ENCODE measurements at regions of chr5 and their contacts with region 1.

Region 1: GRCh38 chr5:39148983-39149534 is 70.3 kb downstream of the FYB1 start:
- DNase-seq: peak in 4 of 5 donors; percentile 43 to 59 (median 56)
- H3K4me3 ChIP-seq: no peak overlapping the region
- H3K4me3 Mint-ChIP-seq: peak overlapping the region in 4 of 8 donors; percentile 2 to 36 (median 27)
- H3K27ac ChIP-seq: no peak overlapping the region
- H3K27ac Mint-ChIP-seq: peak overlapping the region; percentile 62 to 94 (median 86)
- H3K4me1 ChIP-seq: peaks cover 84% of the 10 kb centered on the region
- H3K4me1 Mint-ChIP-seq: peaks cover 59 to 87% (median 71%) of the 10 kb centered on the region in 4 donors
- H3K27me3 ChIP-seq: no peaks in the 10 kb centered on the region
- H3K27me3 Mint-ChIP-seq: no peaks in the 10 kb centered on the region

Region 2: DNA sequence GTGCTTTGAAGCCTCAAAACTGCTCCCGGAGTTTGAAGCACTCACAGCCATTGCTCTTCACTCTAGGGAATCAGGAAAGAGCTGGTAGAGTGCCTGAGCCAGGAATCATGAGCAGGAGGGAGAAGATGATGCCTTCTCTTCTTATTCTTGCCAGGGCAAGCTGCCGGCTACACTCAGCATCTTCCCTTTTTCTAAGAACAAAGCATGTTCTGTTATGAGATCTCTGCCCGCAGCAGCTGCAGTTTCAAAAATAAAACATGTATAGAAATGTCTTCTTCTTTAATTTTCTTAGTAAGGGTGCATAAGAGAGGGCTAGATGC is 17.0 kb before region 1 on chr5:
- CTCF ChIA-PET with region 1: no interaction called
- POLR2A ChIA-PET with region 1: no interaction called
- intact Hi-C with region 1: loop called (anchors 2 kb)
- DNase-seq: no peak
- H3K4me3 ChIP-seq: no peak overlapping the region
- H3K4me3 Mint-ChIP-seq: no peak overlapping the region
- H3K27ac ChIP-seq: no peak overlapping the region
- H3K27ac Mint-ChIP-seq: peak overlapping the region in 6 of 7 donors; percentile 17 to 84 (median 64)
- H3K4me1 ChIP-seq: peaks cover 27% of the 10 kb centered on the region
- H3K4me1 Mint-ChIP-seq: peaks cover 28 to 53% (median 44%) of the 10 kb centered on the region in 4 donors
- H3K27me3 ChIP-seq: no peaks in the 10 kb centered on the region
- H3K27me3 Mint-ChIP-seq: no peaks in the 10 kb centered on the region

Region 3: GRCh38 chr5:39194466-39195136 is 45.5 kb after region 1 on chr5:
- CTCF ChIA-PET with region 1: interaction called, 6 read pairs
- POLR2A ChIA-PET with region 1: interaction called, 275 read pairs
- intact Hi-C with region 1: loop called (anchors 1 kb)
- DNase-seq: no peak
- H3K4me3 ChIP-seq: peak overlapping the region; percentile 13 to 49
- H3K4me3 Mint-ChIP-seq: peak overlapping the region; percentile 84 to 92 (median 88)
- H3K27ac ChIP-seq: peak overlapping the region; percentile 59
- H3K27ac Mint-ChIP-seq: peak overlapping the region; percentile 90 to 98 (median 95)
- H3K4me1 ChIP-seq: peaks cover 77% of the 10 kb centered on the region
- H3K4me1 Mint-ChIP-seq: peaks cover 53 to 79% (median 66%) of the 10 kb centered on the region in 4 donors
- H3K27me3 ChIP-seq: no peaks in the 10 kb centered on the region
- H3K27me3 Mint-ChIP-seq: no peaks in the 10 kb centered on the region

Region 4: DNA sequence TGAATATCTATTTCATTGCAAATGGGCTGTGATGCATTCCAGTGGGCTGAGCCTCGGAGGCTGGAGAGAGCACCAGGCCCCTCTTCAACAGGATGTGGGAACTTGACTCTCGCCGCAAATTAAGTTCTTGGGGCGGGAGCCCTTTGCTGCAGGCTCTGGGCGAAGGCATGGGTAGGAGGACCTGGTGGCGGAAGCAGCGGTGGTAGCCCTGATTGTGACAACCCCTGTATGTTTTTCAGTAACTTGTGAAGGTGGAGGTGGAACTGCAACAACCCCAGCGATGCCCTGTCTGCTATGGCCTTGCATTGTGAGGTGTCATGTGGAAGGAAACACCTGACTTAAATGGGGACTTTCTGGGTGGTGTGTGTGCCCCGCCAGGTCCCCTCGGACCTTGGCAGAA is 60.9 kb after region 1 on chr5:
- CTCF ChIA-PET with region 1: interaction called, 3 read pairs
- POLR2A ChIA-PET with region 1: interaction called, 11 read pairs
- intact Hi-C with region 1: no loop called
- DNase-seq: peak; percentile 87 to 93 (median 88)
- H3K4me3 ChIP-seq: peak overlapping the region; percentile 45 to 48
- H3K4me3 Mint-ChIP-seq: peak overlapping the region; percentile 76 to 85 (median 84)
- H3K27ac ChIP-seq: peak overlapping the region; percentile 84
- H3K27ac Mint-ChIP-seq: peak overlapping the region; percentile 91 to 98 (median 95)
- H3K4me1 ChIP-seq: peaks cover 98% of the 10 kb centered on the region
- H3K4me1 Mint-ChIP-seq: peaks cover 68 to 100% (median 88%) of the 10 kb centered on the region in 4 donors
- H3K27me3 ChIP-seq: no peaks in the 10 kb centered on the region
- H3K27me3 Mint-ChIP-seq: no peaks in the 10 kb centered on the region

Region 5: DNA sequence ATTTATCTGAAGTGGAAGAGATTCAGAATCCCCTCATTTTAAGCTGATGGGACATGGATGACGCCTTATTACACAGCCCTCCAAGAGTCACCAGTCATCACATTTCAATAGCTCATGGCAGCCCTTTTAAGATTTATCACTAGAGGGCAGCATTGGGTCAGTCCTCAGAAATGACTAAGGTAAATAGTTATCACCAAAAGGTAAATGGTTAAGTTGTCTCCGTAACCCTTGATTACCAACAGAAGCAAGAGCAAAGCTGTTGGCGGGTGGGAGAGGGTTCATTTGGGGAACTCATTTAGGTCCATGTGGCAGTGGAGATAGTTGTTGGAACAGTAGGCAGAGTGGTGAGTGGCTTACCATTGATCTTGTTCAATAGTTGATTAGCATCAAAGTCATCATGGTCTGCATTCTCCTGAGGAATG is 227.2 kb after region 1 on chr5:
- CTCF ChIA-PET with region 1: no interaction called
- POLR2A ChIA-PET with region 1: no interaction called
- intact Hi-C with region 1: no loop called
- DNase-seq: peak; percentile 30 to 46 (median 34)
- H3K4me3 ChIP-seq: no peak overlapping the region
- H3K4me3 Mint-ChIP-seq: no peak overlapping the region
- H3K27ac ChIP-seq: no peak overlapping the region
- H3K27ac Mint-ChIP-seq: no peak overlapping the region
- H3K4me1 ChIP-seq: no peaks in the 10 kb centered on the region
- H3K4me1 Mint-ChIP-seq: peaks cover 0 to 8% (median 4%) of the 10 kb centered on the region in 4 donors
- H3K27me3 ChIP-seq: no peaks in the 10 kb centered on the region
- H3K27me3 Mint-ChIP-seq: peaks cover 6 to 15% of the 10 kb centered on the region in 2 donors